ENCODE measurements at regions of chr9 and their contacts with region 1.

Region 1: GRCh38 chr9:105842023-105842644 is 147.8 kb downstream of the TMEM38B start:
- DNase-seq: peak; percentile 27
- H3K4me3 ChIP-seq: no peak overlapping the region
- H3K27ac ChIP-seq: no peak overlapping the region
- H3K4me1 ChIP-seq: no peaks in the 10 kb centered on the region
- H3K27me3 ChIP-seq: peaks cover 4% of the 10 kb centered on the region
- CTCF ChIP-seq: peak; percentile 88 to 90

Region 2: GRCh38 chr9:105341434-105342144 is 500.5 kb before region 1 on chr9:
- CTCF ChIA-PET with region 1: no interaction called
- dilution Hi-C with region 1: no loop called
- in situ Hi-C with region 1: no loop called
- intact Hi-C with region 1: no loop called
- DNase-seq: no peak
- H3K4me3 ChIP-seq: peak overlapping the region in 1 of 3 experiments; percentile 15
- H3K27ac ChIP-seq: no peak overlapping the region
- H3K4me1 ChIP-seq: no peaks in the 10 kb centered on the region
- H3K27me3 ChIP-seq: no peaks in the 10 kb centered on the region
- CTCF ChIP-seq: no peak

Region 3: DNA sequence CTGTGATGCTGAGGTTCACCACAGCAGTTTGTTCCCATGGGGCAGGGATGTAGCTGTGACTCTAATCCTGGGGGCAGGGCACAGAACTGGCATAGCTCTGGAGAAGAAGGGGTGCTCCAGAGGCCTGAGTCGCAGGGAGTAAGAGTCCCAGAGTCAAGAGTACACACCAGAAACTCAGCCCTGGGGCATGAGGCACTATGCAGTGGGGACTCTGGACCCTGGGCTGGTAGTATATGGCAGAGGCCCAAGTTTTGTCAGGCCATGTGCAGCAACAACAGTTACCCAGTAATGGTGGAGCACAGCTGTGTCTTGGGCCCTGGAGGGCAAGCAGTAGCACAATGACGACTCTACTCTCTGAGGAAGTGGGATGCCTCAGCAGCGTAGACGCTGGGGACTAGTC is 104.9 kb before region 1 on chr9:
- CTCF ChIA-PET with region 1: no interaction called
- dilution Hi-C with region 1: no loop called
- in situ Hi-C with region 1: no loop called
- intact Hi-C with region 1: no loop called
- DNase-seq: no peak
- H3K4me3 ChIP-seq: no peak overlapping the region
- H3K27ac ChIP-seq: no peak overlapping the region
- H3K4me1 ChIP-seq: no peaks in the 10 kb centered on the region
- H3K27me3 ChIP-seq: no peaks in the 10 kb centered on the region
- CTCF ChIP-seq: no peak

Region 4: DNA sequence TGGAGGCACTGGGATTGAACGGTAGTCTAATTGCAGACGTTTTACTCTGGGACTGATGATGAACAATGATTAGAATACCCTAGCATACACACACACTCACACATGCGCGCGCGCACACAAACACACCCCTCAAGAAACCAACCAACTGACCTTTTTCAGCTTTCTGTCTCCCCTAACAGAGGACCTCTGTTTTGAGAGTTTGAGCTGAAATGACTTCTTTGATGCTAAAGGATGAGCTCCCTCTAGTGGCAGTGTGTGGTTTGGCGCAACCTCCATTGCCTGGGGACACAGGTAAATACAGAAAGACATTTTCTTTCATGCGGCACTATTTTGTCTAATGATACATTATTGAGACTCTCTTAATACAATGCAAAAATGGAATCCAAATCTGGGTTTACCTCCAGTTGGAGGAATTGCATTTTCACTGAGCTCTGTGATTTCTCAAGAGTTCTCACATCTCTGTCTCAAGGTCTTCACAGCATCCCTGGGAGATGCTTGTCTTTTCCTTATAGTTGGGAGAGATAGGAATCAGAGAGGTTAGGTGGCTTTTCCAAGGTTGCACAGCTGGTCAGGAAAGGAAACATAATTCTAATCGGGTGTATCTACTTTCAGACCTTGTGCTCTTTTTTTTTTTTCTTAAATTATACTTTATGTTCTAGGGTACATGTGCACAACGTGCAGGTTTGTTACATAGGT is 39.7 kb after region 1 on chr9:
- CTCF ChIA-PET with region 1: interaction called, 8 read pairs
- dilution Hi-C with region 1: no loop called
- in situ Hi-C with region 1: no loop called
- intact Hi-C with region 1: loop called (anchors 1 kb)
- DNase-seq: peak; percentile 51
- H3K4me3 ChIP-seq: no peak overlapping the region
- H3K27ac ChIP-seq: no peak overlapping the region
- H3K4me1 ChIP-seq: no peaks in the 10 kb centered on the region
- H3K27me3 ChIP-seq: no peaks in the 10 kb centered on the region
- CTCF ChIP-seq: peak; percentile 91 to 95

Region 5: DNA sequence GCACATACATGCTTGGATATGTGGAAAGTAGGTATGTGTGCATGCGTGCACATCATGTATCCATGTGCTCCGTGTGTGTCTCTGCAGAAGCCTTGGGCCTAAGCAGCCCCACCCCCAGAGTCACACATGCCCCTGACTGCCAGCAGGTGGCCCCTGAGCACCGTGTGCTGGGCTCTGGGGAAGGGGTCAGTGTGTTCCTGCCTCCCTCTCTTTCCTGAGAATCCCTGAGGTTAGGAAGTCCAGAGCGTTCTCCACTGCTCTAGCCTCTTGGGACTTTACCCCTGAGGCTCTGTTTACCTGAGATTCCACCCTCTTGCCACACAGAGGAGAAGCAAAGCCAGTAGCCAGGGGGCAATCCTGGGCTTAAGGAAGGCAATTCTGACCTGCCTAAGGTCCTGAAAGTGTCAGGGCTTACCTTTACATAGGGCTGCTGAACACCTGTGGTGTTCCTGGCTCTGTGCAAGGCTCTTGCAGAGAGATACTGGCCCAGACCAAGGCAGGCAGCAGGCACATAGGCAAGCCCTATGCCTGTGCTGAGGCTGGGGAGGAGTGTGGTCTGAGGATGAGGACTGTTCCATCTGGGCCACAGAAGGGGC is 59.5 kb after region 1 on chr9:
- CTCF ChIA-PET with region 1: no interaction called
- dilution Hi-C with region 1: no loop called
- in situ Hi-C with region 1: no loop called
- intact Hi-C with region 1: no loop called
- DNase-seq: peak; percentile 37
- H3K4me3 ChIP-seq: no peak overlapping the region
- H3K27ac ChIP-seq: no peak overlapping the region
- H3K4me1 ChIP-seq: no peaks in the 10 kb centered on the region
- H3K27me3 ChIP-seq: no peaks in the 10 kb centered on the region
- CTCF ChIP-seq: peak; percentile 72 to 93

Region 6: DNA sequence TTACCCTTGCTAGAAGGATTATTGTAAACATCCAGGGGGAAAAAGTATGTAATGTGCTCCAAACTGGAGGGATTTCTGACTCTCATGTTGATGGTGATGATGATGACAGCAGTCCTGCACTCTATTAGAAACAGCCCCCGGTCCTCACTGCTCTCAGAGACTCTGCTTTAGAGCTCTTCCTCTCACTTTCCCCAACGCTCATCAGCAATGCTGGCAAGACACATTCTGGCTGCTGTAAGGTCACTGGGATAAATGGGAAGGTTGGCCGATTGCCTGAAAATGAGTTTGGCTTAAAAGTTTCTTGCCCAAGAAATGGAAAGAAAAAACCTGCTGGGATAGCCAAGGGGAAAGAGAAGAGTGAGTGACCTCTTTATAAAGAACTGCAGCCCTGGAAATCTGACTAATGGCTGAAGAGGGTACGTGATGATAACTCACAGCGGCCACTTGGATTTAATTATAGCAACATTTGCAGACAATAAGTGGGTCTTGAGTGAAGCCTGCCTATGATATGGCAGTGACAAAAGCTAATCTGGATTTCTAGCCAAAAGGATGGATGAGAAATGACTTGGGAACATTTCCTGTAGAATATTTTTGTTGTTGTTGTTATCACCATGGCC is 88.0 kb after region 1 on chr9:
- CTCF ChIA-PET with region 1: no interaction called
- dilution Hi-C with region 1: no loop called
- in situ Hi-C with region 1: loop called in 1 of 2 experiments (anchors 25 kb)
- intact Hi-C with region 1: no loop called
- DNase-seq: no peak
- H3K4me3 ChIP-seq: no peak overlapping the region
- H3K27ac ChIP-seq: no peak overlapping the region
- H3K4me1 ChIP-seq: no peaks in the 10 kb centered on the region
- H3K27me3 ChIP-seq: no peaks in the 10 kb centered on the region
- CTCF ChIP-seq: no peak

Region 7: DNA sequence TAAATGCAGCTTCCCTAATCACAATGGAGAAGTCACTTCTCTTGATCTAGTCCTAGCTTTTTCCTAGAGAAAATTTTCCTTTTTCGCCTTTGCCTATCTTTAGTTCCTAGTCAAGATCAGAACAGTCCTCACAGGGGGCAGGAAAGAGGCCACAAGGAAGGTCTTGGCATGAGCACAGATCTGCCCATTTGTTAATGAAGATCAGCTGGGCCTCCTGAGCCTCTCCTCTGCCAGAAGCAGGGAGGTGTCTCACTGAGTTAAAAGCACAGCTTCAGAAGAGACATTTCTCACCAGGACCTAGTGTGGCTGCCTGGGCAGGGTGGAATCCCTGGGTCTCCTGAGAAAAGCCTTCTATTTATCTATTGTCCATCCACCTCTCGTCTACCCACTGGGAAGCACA is 210.0 kb after region 1 on chr9:
- CTCF ChIA-PET with region 1: no interaction called
- dilution Hi-C with region 1: no loop called
- in situ Hi-C with region 1: no loop called
- intact Hi-C with region 1: no loop called
- DNase-seq: no peak
- H3K4me3 ChIP-seq: no peak overlapping the region
- H3K27ac ChIP-seq: no peak overlapping the region
- H3K4me1 ChIP-seq: no peaks in the 10 kb centered on the region
- H3K27me3 ChIP-seq: no peaks in the 10 kb centered on the region
- CTCF ChIP-seq: no peak